Posterior cingulate gyrus (tissue), 11 donors: ENCODE measurements at regions of chr3 and their contacts with region 1.

Region 1: GRCh38 chr3:196502775-196503195 is 783 bp downstream of the RNF168 start:
- DNase-seq: peak; percentile 19 to 89 (median 38)

Region 2: DNA sequence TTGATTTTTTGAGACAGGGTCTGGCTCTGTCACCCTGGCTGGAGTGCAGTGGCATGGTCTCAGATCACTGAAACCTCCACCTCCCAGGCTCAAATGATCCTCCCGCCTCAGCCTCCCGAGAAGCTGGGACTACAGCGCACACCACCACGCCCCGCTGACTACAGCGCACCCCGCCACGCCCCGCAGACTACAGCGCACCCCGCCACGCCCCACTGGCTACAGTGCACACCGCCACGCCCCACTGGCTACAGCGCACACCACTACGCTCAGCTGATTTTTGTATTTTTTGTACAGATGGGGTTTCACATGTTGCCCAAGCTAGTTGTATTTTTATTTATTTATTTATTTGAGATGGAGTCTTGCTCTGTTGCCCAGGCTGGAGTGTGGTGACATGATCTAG is 250.9 kb before region 1 on chr3:
- intact Hi-C with region 1: loop called (anchors 10 kb)
- DNase-seq: peak in 1 of 10 donors; percentile 57

Region 3: GRCh38 chr3:196317687-196318467 is 184.9 kb before region 1 on chr3 and contains the start of gene DYNLT2B:
- intact Hi-C with region 1: loop called (anchors 5 kb)
- DNase-seq: peak; percentile 80 to 98 (median 88)

Region 4: DNA sequence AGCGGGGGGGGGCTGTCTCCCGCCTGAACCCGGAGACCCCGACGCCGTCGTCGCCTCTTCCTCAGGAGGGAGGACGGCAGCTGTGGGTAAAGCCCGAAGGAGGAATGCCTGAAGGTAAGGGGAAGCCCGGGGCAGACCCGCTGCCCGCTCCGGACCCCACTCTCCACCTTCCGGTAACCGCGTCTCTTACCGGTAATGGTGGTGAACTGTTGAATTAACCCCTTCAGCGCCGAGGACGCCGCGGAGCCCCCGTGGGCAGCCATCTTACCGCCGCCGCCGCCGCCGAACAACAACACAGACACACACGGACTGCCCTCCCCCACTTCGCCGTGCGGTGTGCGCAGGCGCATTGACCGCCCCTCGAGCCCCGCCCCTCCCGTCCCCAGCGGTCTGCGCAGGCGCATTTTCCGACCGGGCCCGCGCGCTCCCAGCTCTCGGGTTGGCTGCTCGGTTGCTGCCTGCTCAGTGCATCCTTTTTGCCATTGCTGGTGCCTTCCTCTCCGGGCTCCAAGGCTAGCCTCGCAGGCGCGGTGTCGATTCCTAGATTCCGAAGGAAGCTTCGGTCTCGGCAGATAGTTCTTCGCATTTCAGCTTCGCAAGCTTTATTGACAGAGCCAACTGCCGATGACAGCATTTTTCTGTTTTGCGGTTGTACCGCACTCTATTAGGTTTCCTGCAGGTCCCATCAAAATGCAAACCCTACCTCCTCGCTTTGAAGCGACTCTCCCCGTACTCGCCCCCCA is 70.5 kb before region 1 on chr3 and contains the start of gene UBXN7:
- intact Hi-C with region 1: loop called (anchors 2 kb)
- DNase-seq: peak; percentile 91 to 99 (median 94)

Region 5: DNA sequence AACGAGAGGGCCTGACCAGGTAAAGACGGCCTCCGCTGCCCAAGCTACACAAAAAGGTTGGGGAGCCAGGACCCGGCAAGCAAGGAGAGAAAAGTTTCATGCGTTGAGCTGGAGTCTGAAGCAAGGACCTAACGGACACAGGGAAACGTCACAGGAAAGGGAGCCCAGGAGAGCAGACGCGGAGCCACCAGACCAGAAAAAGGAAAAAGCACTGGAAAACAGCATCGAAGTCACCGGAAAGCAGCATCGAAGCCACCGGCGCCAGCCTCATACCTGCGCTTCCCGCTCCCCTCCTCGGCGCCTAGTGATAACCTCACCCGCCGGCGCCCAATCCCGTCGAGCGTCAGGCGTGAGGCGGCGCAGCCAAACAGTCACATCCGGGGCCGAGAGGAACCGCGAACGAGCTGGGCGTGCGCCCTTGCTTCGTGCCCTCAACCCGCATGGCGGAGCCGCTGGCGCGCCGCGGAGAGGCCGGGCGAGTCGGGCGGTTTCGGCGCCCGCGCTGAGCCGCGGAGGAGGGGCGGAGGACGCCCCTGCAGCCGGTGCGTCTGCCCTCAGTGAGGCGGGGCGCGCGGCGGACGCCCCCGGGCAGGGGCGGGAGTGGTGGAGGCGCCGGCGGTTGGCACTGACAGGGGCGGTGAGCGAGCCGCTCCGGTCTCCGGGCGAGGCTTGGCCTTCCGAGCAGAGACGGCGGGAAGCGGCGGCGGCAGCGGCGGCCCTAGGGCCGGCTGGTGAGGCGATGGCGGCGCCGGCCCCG is 65.6 kb after region 1 on chr3 and contains the starts of genes FBXO45 and WDR53:
- intact Hi-C with region 1: loop called (anchors 5 kb)
- DNase-seq: peak; percentile 92 to 99 (median 94)

Region 6: DNA sequence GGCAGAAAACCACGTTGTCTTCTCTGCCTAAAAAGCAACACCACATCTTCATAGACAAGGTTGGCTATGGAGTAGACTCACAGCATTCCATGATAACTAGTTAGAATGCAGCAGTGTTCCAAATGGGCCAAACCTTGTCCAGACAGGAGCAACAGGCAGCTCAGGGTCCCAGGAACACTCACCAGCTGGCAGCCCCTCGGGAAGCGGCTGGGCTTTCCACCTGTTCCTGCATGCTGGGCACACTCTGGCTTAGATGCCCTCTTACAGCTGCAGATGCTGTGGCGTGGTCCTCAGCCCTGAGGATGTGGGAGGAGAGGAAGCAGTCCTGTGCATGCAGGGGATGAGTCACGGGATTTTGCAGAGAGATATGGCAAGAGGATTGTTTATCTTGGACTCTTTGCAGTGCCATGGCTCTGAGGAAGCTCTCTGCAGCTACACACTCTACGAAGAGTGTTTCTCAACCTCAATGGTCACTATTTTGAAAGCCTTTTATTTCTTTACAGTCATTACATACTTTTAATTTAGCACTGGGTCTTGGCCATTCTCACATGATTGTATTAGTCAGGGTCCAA is 148.0 kb after region 1 on chr3:
- intact Hi-C with region 1: no loop called
- DNase-seq: peak in 4 of 10 donors; percentile 12 to 86 (median 59)